Transverse colon (tissue), 4 donors: ENCODE measurements at regions of chr2 and their contacts with region 1.

Region 1: GRCh38 chr2:11411768-11412448 is 54.1 kb downstream of the E2F6 start:
- DNase-seq: peak; percentile 66
- H3K4me3 ChIP-seq: peak overlapping the region in 3 of 4 donors; percentile 23 to 52 (median 29)
- H3K27ac ChIP-seq: peak overlapping the region in 3 of 4 donors; percentile 4 to 58 (median 49)
- H3K4me1 ChIP-seq: peaks cover 0 to 33% (median 18%) of the 10 kb centered on the region in 4 donors
- H3K27me3 ChIP-seq: no peaks in the 10 kb centered on the region
- CTCF ChIP-seq: peak; percentile 74 to 93 (median 84)
- EP300 ChIP-seq: no peak
- POLR2A ChIP-seq: no peak

Region 2: DNA sequence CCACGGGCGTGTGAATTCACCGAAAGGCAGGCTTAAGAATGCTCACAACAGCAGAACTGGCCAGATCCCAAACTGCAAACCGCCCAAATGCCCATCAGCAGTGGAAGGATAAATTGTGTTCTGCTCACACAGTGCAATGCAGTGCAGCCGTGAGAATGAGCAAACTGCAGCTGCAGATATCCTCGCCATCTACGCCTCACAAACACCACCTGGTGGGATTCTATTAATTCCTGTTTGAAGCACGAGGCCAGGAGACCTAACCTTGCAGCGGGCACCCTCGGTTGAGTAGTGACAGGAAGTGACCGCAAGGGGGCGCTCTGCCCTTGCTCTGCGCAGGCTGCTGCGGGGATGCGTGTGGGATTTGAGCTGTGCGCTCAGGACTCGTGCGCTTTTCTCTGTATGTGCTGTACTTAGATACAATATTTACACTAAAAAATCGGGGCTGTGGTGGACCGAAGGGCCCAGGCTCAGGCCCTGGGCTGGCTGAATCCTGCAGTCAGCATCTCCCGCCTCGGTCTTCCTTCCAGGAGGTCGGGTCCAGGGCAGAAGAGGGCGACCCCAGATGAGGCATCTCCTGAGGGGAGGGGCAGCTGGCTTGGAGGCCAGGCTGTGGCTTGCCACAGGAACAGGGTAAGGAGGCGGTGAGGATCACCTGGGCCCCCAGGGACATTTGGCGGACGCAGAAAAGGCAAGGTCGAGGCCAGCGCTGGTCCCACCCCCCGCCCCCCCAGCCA is 579.5 kb before region 1 on chr2:
- in situ Hi-C with region 1: loop called in 1 of 4 experiments (anchors 25 kb)
- intact Hi-C with region 1: no loop called
- DNase-seq: peak; percentile 83
- H3K4me3 ChIP-seq: no peak overlapping the region
- H3K27ac ChIP-seq: no peak overlapping the region
- H3K4me1 ChIP-seq: peaks cover 0 to 15% (median 7%) of the 10 kb centered on the region in 4 donors
- H3K27me3 ChIP-seq: peaks cover 10% of the 10 kb centered on the region
- CTCF ChIP-seq: peak; percentile 93 to 98 (median 96)
- EP300 ChIP-seq: no peak
- POLR2A ChIP-seq: no peak

Region 3: DNA sequence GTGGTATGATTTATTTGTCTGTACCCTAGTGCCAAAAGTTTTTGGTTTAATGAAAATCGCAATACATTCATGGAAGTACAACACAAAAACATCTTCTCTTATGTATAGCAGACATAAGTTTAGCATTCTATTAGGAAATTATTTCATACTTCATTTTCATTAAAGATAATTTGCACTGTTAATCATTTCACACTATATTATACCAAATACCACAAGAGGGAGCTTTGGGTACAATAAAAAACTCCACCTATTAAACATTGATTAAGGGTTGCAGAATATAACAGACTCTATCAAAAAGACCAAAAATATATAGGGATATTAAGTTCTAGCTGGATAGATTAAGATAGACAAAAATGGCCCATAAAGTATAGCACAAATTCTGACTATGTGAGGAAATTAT is 177.6 kb before region 1 on chr2:
- in situ Hi-C with region 1: loop called (anchors 10 to 25 kb)
- intact Hi-C with region 1: no loop called
- DNase-seq: no peak
- H3K4me3 ChIP-seq: no peak overlapping the region
- H3K27ac ChIP-seq: no peak overlapping the region
- H3K4me1 ChIP-seq: no peaks in the 10 kb centered on the region
- H3K27me3 ChIP-seq: no peaks in the 10 kb centered on the region
- CTCF ChIP-seq: peak; percentile 39 to 53 (median 41)
- EP300 ChIP-seq: no peak
- POLR2A ChIP-seq: no peak

Region 4: GRCh38 chr2:11292464-11293255 is 119.2 kb before region 1 on chr2:
- in situ Hi-C with region 1: no loop called
- intact Hi-C with region 1: no loop called
- DNase-seq: no peak
- H3K4me3 ChIP-seq: no peak overlapping the region
- H3K27ac ChIP-seq: no peak overlapping the region
- H3K4me1 ChIP-seq: peaks cover 0 to 45% (median 8%) of the 10 kb centered on the region in 4 donors
- H3K27me3 ChIP-seq: no peaks in the 10 kb centered on the region
- CTCF ChIP-seq: no peak
- EP300 ChIP-seq: no peak
- POLR2A ChIP-seq: no peak

Region 5: GRCh38 chr2:11344342-11344955 is 67.5 kb before region 1 on chr2 and contains the start of gene ROCK2:
- in situ Hi-C with region 1: loop called in 1 of 4 experiments (anchors 10 kb)
- intact Hi-C with region 1: no loop called
- DNase-seq: peak; percentile 90
- H3K4me3 ChIP-seq: peak within 1 kb of the TSS; percentile 74 to 100 (median 80)
- H3K27ac ChIP-seq: peak within 1 kb of the TSS; percentile 100
- H3K4me1 ChIP-seq: peaks cover 8 to 51% (median 40%) of the 10 kb centered on the region in 4 donors
- H3K27me3 ChIP-seq: no peaks in the 10 kb centered on the region
- CTCF ChIP-seq: no peak
- EP300 ChIP-seq: no peak
- POLR2A ChIP-seq: peak; percentile 49
- total RNA-seq, gene ROCK2: 53.9 to 93.0 (median 74.7) TPM